Activated CD4-positive, alpha-beta memory T cell treated with anti-CD3 and anti-CD28 coated beads for 36 hours (primary cell): ENCODE measurements at regions of chr1 and their contacts with region 1.

Region 1: GRCh38 chr1:27959400-27960217 is at the start of gene XKR8:
- DNase-seq: peak; percentile 89
- H3K4me3 Mint-ChIP-seq: peak within 1 kb of the TSS; percentile 78
- H3K27ac Mint-ChIP-seq: peak within 1 kb of the TSS; percentile 82
- H3K4me1 Mint-ChIP-seq: peaks cover 20% of the 10 kb centered on the region
- H3K27me3 Mint-ChIP-seq: no peaks in the 10 kb centered on the region
- total RNA-seq, gene XKR8: 7.1 to 8.9 TPM

Region 2: GRCh38 chr1:27940297-27940696 is 19.3 kb before region 1 on chr1:
- CTCF ChIA-PET with region 1: interaction called, 14 read pairs
- POLR2A ChIA-PET with region 1: interaction called, 4 read pairs
- intact Hi-C with region 1: no loop called
- DNase-seq: peak; percentile 84
- H3K4me3 Mint-ChIP-seq: no peak overlapping the region
- H3K27ac Mint-ChIP-seq: peak overlapping the region; percentile 54
- H3K4me1 Mint-ChIP-seq: peaks cover 25% of the 10 kb centered on the region
- H3K27me3 Mint-ChIP-seq: peaks cover 7% of the 10 kb centered on the region

Region 3: GRCh38 chr1:27979151-27979858 is 19.7 kb after region 1 on chr1:
- CTCF ChIA-PET with region 1: interaction called, 3 read pairs
- POLR2A ChIA-PET with region 1: no interaction called
- intact Hi-C with region 1: loop called (anchors 1 kb)
- DNase-seq: no peak
- H3K4me3 Mint-ChIP-seq: no peak overlapping the region
- H3K27ac Mint-ChIP-seq: no peak overlapping the region
- H3K4me1 Mint-ChIP-seq: no peaks in the 10 kb centered on the region
- H3K27me3 Mint-ChIP-seq: no peaks in the 10 kb centered on the region